Naive thymus-derived CD4-positive, alpha-beta T cell (primary cell): ENCODE measurements at regions of chr2 and their contacts with region 1.

Region 1: GRCh38 chr2:12856934-12857601 is 140.3 kb downstream of the TRIB2 start:
- DNase-seq: peak in 7 of 9 donors; percentile 46 to 81 (median 73)
- ATAC-seq: peak; percentile 91
- H3K4me3 ChIP-seq: peak overlapping the region; percentile 1
- H3K4me3 Mint-ChIP-seq: no peak overlapping the region
- H3K27ac ChIP-seq: no peak overlapping the region
- H3K27ac Mint-ChIP-seq: peak overlapping the region in 1 of 9 donors; percentile 2
- H3K4me1 ChIP-seq: peaks cover 40 to 56% of the 10 kb centered on the region in 2 donors
- H3K4me1 Mint-ChIP-seq: peaks cover 0 to 25% (median 14%) of the 10 kb centered on the region in 7 donors
- H3K27me3 ChIP-seq: no peaks in the 10 kb centered on the region
- H3K27me3 Mint-ChIP-seq: peaks cover 6 to 12% (median 10%) of the 10 kb centered on the region in 5 donors

Region 2: DNA sequence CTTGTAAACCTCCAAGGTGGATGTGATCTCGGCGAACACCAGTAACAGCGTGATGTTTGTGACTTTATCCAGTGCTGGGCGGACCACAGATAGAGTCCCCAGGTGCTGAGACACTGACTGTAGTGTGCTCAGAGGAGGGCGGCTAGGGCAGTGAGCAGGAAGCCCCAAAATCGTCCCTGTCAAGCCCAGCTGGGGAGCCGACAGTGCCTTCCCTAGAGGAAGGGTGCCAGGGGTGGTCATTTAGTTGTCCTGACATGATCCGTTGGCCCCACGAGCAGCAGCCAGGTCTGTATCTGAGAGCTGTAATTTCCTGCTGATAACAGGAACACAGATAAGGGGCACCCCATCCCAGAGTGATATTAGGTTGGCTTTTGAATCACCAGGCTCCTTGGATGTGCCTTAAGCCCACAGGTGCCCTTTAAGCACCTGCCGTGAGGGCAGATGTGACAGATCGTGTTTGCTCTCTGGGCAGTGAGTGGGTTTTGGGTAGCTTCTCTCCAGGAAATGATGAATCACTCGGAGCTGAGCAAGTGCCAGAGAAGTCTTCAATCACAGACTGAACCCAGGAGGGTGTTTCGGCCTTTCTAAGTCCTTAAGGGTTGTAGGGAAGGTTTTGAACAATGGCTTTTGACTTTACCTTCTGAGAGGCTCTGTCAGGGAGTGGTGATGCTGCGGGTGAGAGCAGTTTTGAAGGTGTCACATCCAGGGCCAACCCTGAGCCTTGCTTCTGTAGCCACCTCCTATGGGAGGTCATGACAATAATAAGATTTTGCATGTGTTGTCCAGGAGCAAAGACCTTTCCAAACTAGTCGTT is 1103.0 kb before region 1 on chr2:
- CTCF ChIA-PET with region 1: no interaction called
- POLR2A ChIA-PET with region 1: no interaction called
- intact Hi-C with region 1: loop called in 1 of 2 experiments (anchors 5 kb)
- DNase-seq: peak in 7 of 9 donors; percentile 27 to 69 (median 36)
- ATAC-seq: peak; percentile 62
- H3K4me3 ChIP-seq: peak overlapping the region; percentile 37
- H3K4me3 Mint-ChIP-seq: peak overlapping the region; percentile 79 to 93 (median 82)
- H3K27ac ChIP-seq: peak overlapping the region; percentile 66
- H3K27ac Mint-ChIP-seq: peak overlapping the region; percentile 84 to 97 (median 94)
- H3K4me1 ChIP-seq: peaks cover 56 to 64% of the 10 kb centered on the region in 2 donors
- H3K4me1 Mint-ChIP-seq: peaks cover 58 to 93% (median 84%) of the 10 kb centered on the region in 7 donors
- H3K27me3 ChIP-seq: no peaks in the 10 kb centered on the region
- H3K27me3 Mint-ChIP-seq: no peaks in the 10 kb centered on the region

Region 3: GRCh38 chr2:12293874-12294273 is 563.2 kb before region 1 on chr2:
- CTCF ChIA-PET with region 1: no interaction called
- POLR2A ChIA-PET with region 1: no interaction called
- intact Hi-C with region 1: loop called in 1 of 2 experiments (anchors 10 kb)
- DNase-seq: no peak
- ATAC-seq: peak; percentile 27
- H3K4me3 ChIP-seq: no peak overlapping the region
- H3K4me3 Mint-ChIP-seq: peak overlapping the region in 5 of 10 donors; percentile 13 to 75 (median 60)
- H3K27ac ChIP-seq: no peak overlapping the region
- H3K27ac Mint-ChIP-seq: peak overlapping the region in 4 of 9 donors; percentile 18 to 90 (median 68)
- H3K4me1 ChIP-seq: peaks cover 0 to 16% of the 10 kb centered on the region in 2 donors
- H3K4me1 Mint-ChIP-seq: peaks cover 19 to 53% (median 40%) of the 10 kb centered on the region in 7 donors
- H3K27me3 ChIP-seq: no peaks in the 10 kb centered on the region
- H3K27me3 Mint-ChIP-seq: peaks cover 0 to 4% (median 0%) of the 10 kb centered on the region in 5 donors

Region 4: DNA sequence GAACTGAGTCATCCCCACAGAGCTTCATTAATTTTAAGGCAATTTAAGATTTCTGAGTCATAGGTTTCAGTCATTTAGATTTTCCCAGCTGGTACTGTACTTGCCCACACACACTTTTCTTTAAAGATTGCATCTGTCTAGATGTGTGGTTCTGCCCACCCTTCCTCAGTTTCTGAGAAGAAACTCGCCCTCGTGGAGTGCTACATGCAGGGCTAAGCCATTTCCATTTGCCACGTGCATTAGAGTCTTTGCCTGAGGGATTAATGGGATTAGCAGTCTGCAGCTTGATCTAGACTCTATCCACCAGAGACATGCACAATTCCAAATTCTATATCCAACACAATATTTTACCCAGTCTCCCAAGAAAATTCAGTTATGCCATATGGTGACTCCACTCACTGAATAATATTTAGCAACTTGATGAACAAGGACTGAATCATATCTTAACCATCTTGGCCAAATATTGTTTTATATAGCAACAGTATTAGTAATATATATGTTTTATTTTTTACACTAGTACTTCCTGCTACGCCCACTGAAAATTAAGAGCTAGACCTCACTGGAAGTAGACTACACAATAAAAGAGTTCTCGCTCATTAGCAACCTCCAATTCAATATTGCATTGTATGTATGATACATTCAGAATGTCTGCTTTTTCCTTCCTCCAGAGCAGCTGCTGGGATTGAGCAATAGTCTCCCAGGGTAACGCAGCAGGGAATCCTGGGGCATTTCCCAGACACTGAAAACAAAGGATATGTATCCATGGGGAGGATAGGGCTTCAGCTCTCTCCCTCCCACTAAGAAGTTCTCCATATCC is 154.6 kb before region 1 on chr2:
- CTCF ChIA-PET with region 1: no interaction called
- POLR2A ChIA-PET with region 1: no interaction called
- intact Hi-C with region 1: no loop called
- DNase-seq: no peak
- ATAC-seq: no peak
- H3K4me3 ChIP-seq: no peak overlapping the region
- H3K4me3 Mint-ChIP-seq: peak overlapping the region in 5 of 10 donors; percentile 5 to 37 (median 23)
- H3K27ac ChIP-seq: no peak overlapping the region
- H3K27ac Mint-ChIP-seq: no peak overlapping the region
- H3K4me1 ChIP-seq: peaks cover 14 to 22% of the 10 kb centered on the region in 2 donors
- H3K4me1 Mint-ChIP-seq: peaks cover 15 to 56% (median 40%) of the 10 kb centered on the region in 7 donors
- H3K27me3 ChIP-seq: no peaks in the 10 kb centered on the region
- H3K27me3 Mint-ChIP-seq: peaks cover 0 to 44% (median 0%) of the 10 kb centered on the region in 5 donors

Region 5: GRCh38 chr2:12728221-12728777 is 128.8 kb before region 1 on chr2:
- CTCF ChIA-PET with region 1: no interaction called
- POLR2A ChIA-PET with region 1: no interaction called
- intact Hi-C with region 1: loop called in 1 of 2 experiments (anchors 2 kb)
- DNase-seq: peak in 8 of 9 donors; percentile 32 to 88 (median 82)
- ATAC-seq: peak; percentile 86
- H3K4me3 ChIP-seq: peak overlapping the region; percentile 5
- H3K4me3 Mint-ChIP-seq: peak overlapping the region; percentile 63 to 92 (median 77)
- H3K27ac ChIP-seq: peak overlapping the region; percentile 40
- H3K27ac Mint-ChIP-seq: peak overlapping the region; percentile 74 to 96 (median 89)
- H3K4me1 ChIP-seq: peaks cover 38 to 68% of the 10 kb centered on the region in 2 donors
- H3K4me1 Mint-ChIP-seq: peaks cover 73 to 99% (median 94%) of the 10 kb centered on the region in 7 donors
- H3K27me3 ChIP-seq: no peaks in the 10 kb centered on the region
- H3K27me3 Mint-ChIP-seq: no peaks in the 10 kb centered on the region

Region 6: GRCh38 chr2:12897181-12897580 is 40.1 kb after region 1 on chr2:
- CTCF ChIA-PET with region 1: no interaction called
- POLR2A ChIA-PET with region 1: interaction called, 3 read pairs
- intact Hi-C with region 1: loop called in 1 of 2 experiments (anchors 2 kb)
- DNase-seq: peak in 5 of 9 donors; percentile 19 to 37 (median 32)
- ATAC-seq: no peak
- H3K4me3 ChIP-seq: no peak overlapping the region
- H3K4me3 Mint-ChIP-seq: peak overlapping the region in 8 of 10 donors; percentile 29 to 63 (median 54)
- H3K27ac ChIP-seq: no peak overlapping the region
- H3K27ac Mint-ChIP-seq: peak overlapping the region in 8 of 9 donors; percentile 2 to 51 (median 28)
- H3K4me1 ChIP-seq: peaks cover 7 to 14% of the 10 kb centered on the region in 2 donors
- H3K4me1 Mint-ChIP-seq: peaks cover 9 to 34% (median 22%) of the 10 kb centered on the region in 7 donors
- H3K27me3 ChIP-seq: no peaks in the 10 kb centered on the region
- H3K27me3 Mint-ChIP-seq: peaks cover 0 to 21% (median 0%) of the 10 kb centered on the region in 5 donors

Region 7: GRCh38 chr2:13156916-13157315 is 299.8 kb after region 1 on chr2:
- CTCF ChIA-PET with region 1: no interaction called
- POLR2A ChIA-PET with region 1: no interaction called
- intact Hi-C with region 1: no loop called
- DNase-seq: no peak
- ATAC-seq: no peak
- H3K4me3 ChIP-seq: no peak overlapping the region
- H3K4me3 Mint-ChIP-seq: no peak overlapping the region
- H3K27ac ChIP-seq: no peak overlapping the region
- H3K27ac Mint-ChIP-seq: no peak overlapping the region
- H3K4me1 ChIP-seq: no peaks in the 10 kb centered on the region
- H3K4me1 Mint-ChIP-seq: no peaks in the 10 kb centered on the region
- H3K27me3 ChIP-seq: no peaks in the 10 kb centered on the region
- H3K27me3 Mint-ChIP-seq: peaks cover 0 to 45% (median 25%) of the 10 kb centered on the region in 5 donors